ENCODE measurements at regions of chr12 and their contacts with region 1.

Region 1: GRCh38 chr12:68610370-68611093 is at the start of gene RAP1B:
- DNase-seq: peak; percentile 82
- ATAC-seq: peak; percentile 82
- H3K4me3 Mint-ChIP-seq: peak within 1 kb of the TSS; percentile 95
- H3K27ac Mint-ChIP-seq: peak within 1 kb of the TSS; percentile 99
- H3K4me1 Mint-ChIP-seq: peaks cover 48% of the 10 kb centered on the region
- H3K27me3 Mint-ChIP-seq: no peaks in the 10 kb centered on the region
- CTCF ChIP-seq: no peak
- total RNA-seq, gene RAP1B: 136 and 142 TPM in 2 replicates

Region 2: GRCh38 chr12:67698672-67699581 is 911.6 kb before region 1 on chr12:
- CTCF ChIA-PET with region 1: no interaction called
- POLR2A ChIA-PET with region 1: no interaction called
- intact Hi-C with region 1: loop called (anchors 2 kb)
- DNase-seq: no peak
- ATAC-seq: peak; percentile 87
- H3K4me3 Mint-ChIP-seq: peak overlapping the region; percentile 74
- H3K27ac Mint-ChIP-seq: peak overlapping the region; percentile 86
- H3K4me1 Mint-ChIP-seq: peaks cover 43% of the 10 kb centered on the region
- H3K27me3 Mint-ChIP-seq: peaks cover 4% of the 10 kb centered on the region
- CTCF ChIP-seq: no peak

Region 3: DNA sequence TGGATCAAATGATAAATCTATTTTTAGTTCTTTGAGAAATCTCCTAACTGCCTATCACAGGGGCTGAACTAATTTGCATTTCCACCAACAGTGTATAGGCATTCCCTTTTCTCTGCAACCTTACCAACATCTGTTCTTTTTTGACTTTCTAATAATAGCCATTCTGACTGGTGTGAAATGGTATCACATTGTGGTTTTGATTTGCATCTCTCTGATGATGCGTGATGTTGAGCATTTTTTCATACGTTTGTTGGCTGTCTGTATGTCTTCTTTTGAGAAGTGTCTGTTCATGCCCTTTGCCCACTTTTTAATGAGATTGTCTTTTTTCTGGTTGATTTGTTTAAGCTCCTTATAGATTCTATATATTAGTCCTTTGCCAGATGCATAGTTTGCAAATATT is 554.2 kb before region 1 on chr12:
- CTCF ChIA-PET with region 1: no interaction called
- POLR2A ChIA-PET with region 1: no interaction called
- intact Hi-C with region 1: no loop called
- DNase-seq: no peak
- ATAC-seq: no peak
- H3K4me3 Mint-ChIP-seq: peak overlapping the region; percentile 1
- H3K27ac Mint-ChIP-seq: peak overlapping the region; percentile 14
- H3K4me1 Mint-ChIP-seq: peaks cover 14% of the 10 kb centered on the region
- H3K27me3 Mint-ChIP-seq: no peaks in the 10 kb centered on the region
- CTCF ChIP-seq: no peak

Region 4: GRCh38 chr12:68364893-68365725 is 245.4 kb before region 1 on chr12:
- CTCF ChIA-PET with region 1: no interaction called
- POLR2A ChIA-PET with region 1: interaction called, 29 read pairs
- intact Hi-C with region 1: no loop called
- DNase-seq: peak; percentile 55
- ATAC-seq: peak; percentile 81
- H3K4me3 Mint-ChIP-seq: peak overlapping the region; percentile 82
- H3K27ac Mint-ChIP-seq: peak overlapping the region; percentile 88
- H3K4me1 Mint-ChIP-seq: peaks cover 53% of the 10 kb centered on the region
- H3K27me3 Mint-ChIP-seq: no peaks in the 10 kb centered on the region
- CTCF ChIP-seq: no peak

Region 5: GRCh38 chr12:68595241-68595640 is 15.3 kb before region 1 on chr12:
- CTCF ChIA-PET with region 1: interaction called, 3 read pairs
- POLR2A ChIA-PET with region 1: interaction called, 35 read pairs
- intact Hi-C with region 1: no loop called
- DNase-seq: no peak
- ATAC-seq: peak; percentile 85
- H3K4me3 Mint-ChIP-seq: peak overlapping the region; percentile 17
- H3K27ac Mint-ChIP-seq: peak overlapping the region; percentile 43
- H3K4me1 Mint-ChIP-seq: peaks cover 59% of the 10 kb centered on the region
- H3K27me3 Mint-ChIP-seq: no peaks in the 10 kb centered on the region
- CTCF ChIP-seq: no peak

Region 6: GRCh38 chr12:68648179-68648578 is 37.6 kb after region 1 on chr12:
- CTCF ChIA-PET with region 1: no interaction called
- POLR2A ChIA-PET with region 1: no interaction called
- intact Hi-C with region 1: loop called (anchors 5 kb)
- DNase-seq: no peak
- ATAC-seq: no peak
- H3K4me3 Mint-ChIP-seq: no peak overlapping the region
- H3K27ac Mint-ChIP-seq: peak overlapping the region; percentile 18
- H3K4me1 Mint-ChIP-seq: peaks cover 29% of the 10 kb centered on the region
- H3K27me3 Mint-ChIP-seq: no peaks in the 10 kb centered on the region
- CTCF ChIP-seq: no peak

Region 7: DNA sequence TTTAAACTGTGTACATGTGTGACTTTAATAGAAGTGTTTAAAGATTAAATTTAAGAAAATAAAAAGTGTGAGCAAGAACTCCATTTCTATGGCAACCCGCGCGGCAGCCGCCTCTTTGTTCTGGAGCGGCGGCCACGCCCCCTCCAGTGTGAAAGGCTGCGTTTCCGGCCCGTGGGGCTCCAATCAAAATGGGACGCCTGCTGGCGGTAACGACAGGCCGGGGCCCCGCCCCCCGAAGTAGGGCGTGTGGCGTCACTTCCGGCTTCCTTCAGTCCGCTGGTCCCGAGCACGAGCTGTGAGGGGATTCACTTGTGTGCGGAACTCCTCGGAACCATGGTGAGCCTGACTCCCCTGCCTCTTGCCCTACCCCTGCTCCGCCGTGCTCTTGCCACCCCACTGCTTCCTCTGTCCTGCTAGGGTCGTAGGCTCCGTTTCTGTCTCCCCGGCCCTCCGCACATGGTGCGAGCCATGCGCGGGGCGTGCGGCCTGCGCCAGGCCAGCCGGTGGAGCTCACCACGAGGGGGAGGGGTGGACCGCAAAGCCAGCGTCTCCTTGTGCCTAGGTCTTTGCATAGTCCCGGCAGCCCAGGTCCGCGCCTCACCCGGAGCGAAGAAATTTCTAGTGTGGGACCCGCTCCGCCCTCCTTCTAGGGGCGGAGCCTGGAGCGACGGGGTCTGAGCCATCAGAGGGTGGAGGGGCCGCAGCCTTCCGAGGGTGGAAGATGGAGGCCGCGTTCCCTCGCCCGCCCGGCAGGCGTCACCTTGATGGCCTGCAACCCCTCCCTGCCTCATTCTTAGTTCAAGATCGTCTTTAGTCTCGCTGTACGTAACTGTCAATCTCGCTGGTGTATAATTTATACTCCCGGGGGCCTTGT is 974.9 kb after region 1 on chr12 and contains the start of gene CCT2:
- CTCF ChIA-PET with region 1: no interaction called
- POLR2A ChIA-PET with region 1: no interaction called
- intact Hi-C with region 1: loop called (anchors 5 kb)
- DNase-seq: peak; percentile 91
- ATAC-seq: peak; percentile 90
- H3K4me3 Mint-ChIP-seq: peak within 1 kb of the TSS; percentile 96
- H3K27ac Mint-ChIP-seq: peak within 1 kb of the TSS; percentile 95
- H3K4me1 Mint-ChIP-seq: peaks cover 8% of the 10 kb centered on the region
- H3K27me3 Mint-ChIP-seq: no peaks in the 10 kb centered on the region
- CTCF ChIP-seq: no peak
- total RNA-seq, gene CCT2: 205 and 211 TPM in 2 replicates